H1 (cell line): ENCODE measurements at regions of chr20 and their contacts with region 1.

Region 1: GRCh38 chr20:31698803-31699718 is 23.6 kb downstream of the BCL2L1 start:
- DNase-seq: no peak
- H3K4me3 ChIP-seq: no peak overlapping the region
- H3K27ac ChIP-seq: no peak overlapping the region
- H3K4me1 ChIP-seq: peaks cover 9 to 15% (median 10%) of the 10 kb centered on the region in 4 experiments
- H3K27me3 ChIP-seq: no peaks in the 10 kb centered on the region
- CTCF ChIP-seq: no peak
- EP300 ChIP-seq: no peak
- POLR2A ChIP-seq: no peak
- RAD21 ChIP-seq: no peak

Region 2: DNA sequence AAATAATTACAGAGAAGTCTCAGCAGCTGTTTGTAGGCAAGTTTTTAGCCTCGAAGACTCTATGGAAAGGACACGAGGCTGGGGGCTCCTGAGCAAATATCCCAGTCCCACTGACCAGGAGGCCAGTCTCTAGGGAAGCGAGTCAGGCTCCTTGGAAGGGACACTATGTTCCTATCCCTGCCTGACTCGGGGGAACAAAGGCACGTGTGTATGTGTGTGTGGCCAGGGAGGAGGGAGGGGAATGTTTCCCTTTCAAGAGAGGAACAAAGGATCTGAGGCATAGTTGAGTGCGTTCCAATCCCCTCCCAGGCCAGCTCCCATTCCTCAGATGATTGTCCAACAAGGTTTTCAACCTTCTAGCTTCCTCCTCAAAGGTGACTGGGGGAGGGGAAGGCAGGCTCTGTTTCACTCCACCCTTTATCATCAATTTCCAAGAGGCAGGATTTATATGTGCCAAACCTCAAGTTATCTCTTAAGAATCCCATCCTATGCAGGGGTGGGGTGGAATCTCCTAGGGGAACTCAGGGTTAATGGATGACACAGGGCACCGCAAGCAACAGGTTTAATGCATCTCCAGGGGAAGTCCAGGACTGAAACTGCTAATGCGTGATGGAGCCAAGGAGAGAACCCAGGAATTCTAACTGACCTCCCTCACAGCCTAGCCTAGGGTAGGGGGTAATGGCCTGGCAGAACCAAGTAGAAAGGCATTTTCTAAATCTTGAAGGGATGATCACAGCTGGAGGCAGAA is 13.7 kb after region 1 on chr20:
- CTCF ChIA-PET with region 1: interaction called, 5 read pairs
- POLR2A ChIA-PET with region 1: interaction called, 35 read pairs
- DNase-seq: peak; percentile 55 to 86
- H3K4me3 ChIP-seq: peak overlapping the region in 3 of 4 experiments; percentile 17 to 43 (median 30); a peak in 4 of 8 replicates
- H3K27ac ChIP-seq: peak overlapping the region; percentile 31
- H3K4me1 ChIP-seq: peaks cover 27 to 44% (median 36%) of the 10 kb centered on the region in 4 experiments
- H3K27me3 ChIP-seq: no peaks in the 10 kb centered on the region
- CTCF ChIP-seq: no peak
- EP300 ChIP-seq: peak in 1 of 2 experiments; percentile 87; a peak in 1 of 3 replicates
- POLR2A ChIP-seq: no peak; a peak in 1 of 3 replicates
- RAD21 ChIP-seq: no peak; a peak in 1 of 4 replicates